ENCODE measurements at regions of chr14 and their contacts with region 1.

Region 1: DNA sequence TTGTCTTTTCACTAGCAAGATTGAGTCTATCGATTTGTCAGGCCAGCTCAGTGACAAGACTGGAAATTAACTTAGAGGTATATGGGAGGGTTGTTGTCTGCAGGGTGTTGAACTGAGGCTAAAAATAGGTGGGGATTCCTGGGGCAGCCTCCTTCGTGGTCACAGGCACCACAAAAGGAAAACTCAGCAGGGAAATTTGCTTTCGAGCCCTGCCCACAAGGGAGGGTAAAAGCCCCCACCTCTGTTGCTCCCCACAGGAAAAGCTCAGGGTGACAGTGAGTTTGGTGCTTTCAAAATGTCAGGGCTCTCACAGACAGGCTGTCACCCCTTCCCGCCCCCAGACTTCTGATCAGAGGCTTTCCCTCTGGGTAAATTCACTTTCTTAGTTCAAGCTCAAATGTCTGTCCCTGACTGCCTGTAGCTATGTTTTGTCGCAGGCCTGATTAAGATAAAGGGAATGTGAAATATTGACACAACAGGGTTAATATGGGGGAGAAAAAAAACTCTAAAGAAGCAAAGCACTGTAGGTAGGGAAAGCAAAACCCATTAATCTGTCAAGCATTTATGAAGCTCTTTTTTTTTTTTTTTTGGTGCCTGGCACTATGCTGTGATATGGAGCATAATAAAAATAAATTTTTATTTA is 11.7 kb upstream of the NFKBIA start:
- H3K4me3 Mint-ChIP-seq: no peak overlapping the region
- H3K27ac Mint-ChIP-seq: no peak overlapping the region
- H3K4me1 Mint-ChIP-seq: peaks cover 11% of the 10 kb centered on the region
- H3K27me3 Mint-ChIP-seq: no peaks in the 10 kb centered on the region

Region 2: GRCh38 chr14:34331728-34332623 is 1084.3 kb before region 1 on chr14:
- intact Hi-C with region 1: loop called (anchors 5 kb)
- H3K4me3 Mint-ChIP-seq: no peak overlapping the region
- H3K27ac Mint-ChIP-seq: no peak overlapping the region
- H3K4me1 Mint-ChIP-seq: peaks cover 10% of the 10 kb centered on the region
- H3K27me3 Mint-ChIP-seq: no peaks in the 10 kb centered on the region

Region 3: GRCh38 chr14:35046048-35046741 is 370.0 kb before region 1 on chr14 and contains the start of gene FAM177A1:
- intact Hi-C with region 1: loop called (anchors 10 kb)
- H3K4me3 Mint-ChIP-seq: peak within 1 kb of the TSS; percentile 99
- H3K27ac Mint-ChIP-seq: peak within 1 kb of the TSS; percentile 98
- H3K4me1 Mint-ChIP-seq: peaks cover 38% of the 10 kb centered on the region
- H3K27me3 Mint-ChIP-seq: no peaks in the 10 kb centered on the region

Region 4: GRCh38 chr14:35140718-35141581 is 275.3 kb before region 1 on chr14:
- intact Hi-C with region 1: loop called (anchors 2 kb)
- H3K4me3 Mint-ChIP-seq: no peak overlapping the region
- H3K27ac Mint-ChIP-seq: no peak overlapping the region
- H3K4me1 Mint-ChIP-seq: peaks cover 7% of the 10 kb centered on the region
- H3K27me3 Mint-ChIP-seq: no peaks in the 10 kb centered on the region

Region 5: GRCh38 chr14:35365130-35366055 is 50.8 kb before region 1 on chr14:
- intact Hi-C with region 1: no loop called
- H3K4me3 Mint-ChIP-seq: peak overlapping the region; percentile 39
- H3K27ac Mint-ChIP-seq: peak overlapping the region; percentile 98
- H3K4me1 Mint-ChIP-seq: peaks cover 65% of the 10 kb centered on the region
- H3K27me3 Mint-ChIP-seq: no peaks in the 10 kb centered on the region

Region 6: GRCh38 chr14:35687335-35687939 is 271.2 kb after region 1 on chr14:
- intact Hi-C with region 1: loop called (anchors 5 kb)
- H3K4me3 Mint-ChIP-seq: no peak overlapping the region
- H3K27ac Mint-ChIP-seq: no peak overlapping the region
- H3K4me1 Mint-ChIP-seq: peaks cover 5% of the 10 kb centered on the region
- H3K27me3 Mint-ChIP-seq: no peaks in the 10 kb centered on the region